Panc1 (cell line): ENCODE measurements at regions of chr9 and their contacts with region 1.

Region 1: GRCh38 chr9:122302237-122303093 is 37.8 kb downstream of the MRRF start:
- DNase-seq: no peak
- ATAC-seq: no peak
- H3K4me3 ChIP-seq: no peak overlapping the region
- H3K27ac ChIP-seq: no peak overlapping the region
- H3K4me1 ChIP-seq: no peaks in the 10 kb centered on the region
- H3K27me3 ChIP-seq: no peaks in the 10 kb centered on the region
- CTCF ChIP-seq: no peak

Region 2: GRCh38 chr9:122138560-122139268 is 163.8 kb before region 1 on chr9:
- CTCF ChIA-PET with region 1: no interaction called
- POLR2A ChIA-PET with region 1: interaction called, 16 read pairs
- in situ Hi-C with region 1: no loop called
- intact Hi-C with region 1: no loop called
- DNase-seq: no peak
- ATAC-seq: 0 out of 2 replicates have a peak, but pooled peaks have one; percentile 60
- H3K4me3 ChIP-seq: no peak overlapping the region
- H3K27ac ChIP-seq: no peak overlapping the region
- H3K4me1 ChIP-seq: peaks cover 3% of the 10 kb centered on the region; the same call in 1 of the 2 replicates
- H3K27me3 ChIP-seq: no peaks in the 10 kb centered on the region
- CTCF ChIP-seq: no peak